Psoas muscle (tissue), 8 donors: ENCODE measurements at regions of chr4 and their contacts with region 1.

Region 1: GRCh38 chr4:52049266-52049665 is 1.8 kb upstream of the SPATA18 start:
- DNase-seq: no peak
- ATAC-seq: no peak
- H3K4me3 ChIP-seq: no peak overlapping the region
- H3K27ac ChIP-seq: no peak overlapping the region
- H3K4me1 ChIP-seq: peaks cover 4% of the 10 kb centered on the region
- H3K27me3 ChIP-seq: peaks cover 0 to 5% (median 0%) of the 10 kb centered on the region in 3 donors
- CTCF ChIP-seq: no peak

Region 2: DNA sequence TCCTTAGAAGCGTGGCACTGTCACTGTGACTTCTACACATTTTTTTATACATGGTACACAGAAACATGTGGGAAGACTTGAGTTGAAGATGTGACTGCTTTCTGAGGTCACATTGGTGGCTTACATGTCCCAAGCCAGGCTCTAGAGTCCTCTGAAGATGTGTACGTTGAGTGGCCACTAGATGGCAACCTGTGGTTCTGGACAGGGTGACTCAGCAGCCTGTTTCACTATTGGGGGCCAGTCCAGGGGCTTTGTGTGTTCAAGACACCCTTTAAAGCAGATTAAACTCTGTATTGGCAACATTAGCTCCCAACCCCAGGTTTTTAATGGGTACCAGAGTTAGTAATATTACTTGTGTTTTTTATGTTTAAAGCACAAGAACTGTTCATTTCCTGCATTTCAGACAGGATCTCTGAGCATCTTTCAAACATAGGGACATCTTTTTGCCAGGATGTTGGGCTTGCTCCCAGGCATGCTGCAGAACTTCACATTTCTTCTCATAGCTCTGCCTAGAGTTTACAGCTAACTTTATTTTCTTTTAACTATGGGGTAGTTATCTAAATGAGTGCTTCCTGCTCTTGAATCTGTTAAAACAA is 153.4 kb before region 1 on chr4:
- intact Hi-C with region 1: no loop called
- DNase-seq: peak; percentile 38 to 61
- ATAC-seq: peak; percentile 90 to 97 (median 96)
- H3K4me3 ChIP-seq: no peak overlapping the region
- H3K27ac ChIP-seq: peak overlapping the region; percentile 57
- H3K4me1 ChIP-seq: peaks cover 12% of the 10 kb centered on the region
- H3K27me3 ChIP-seq: no peaks in the 10 kb centered on the region
- CTCF ChIP-seq: peak; percentile 78

Region 3: GRCh38 chr4:51995647-51996220 is 53.5 kb before region 1 on chr4:
- intact Hi-C with region 1: no loop called
- DNase-seq: no peak
- ATAC-seq: no peak
- H3K4me3 ChIP-seq: no peak overlapping the region
- H3K27ac ChIP-seq: no peak overlapping the region
- H3K4me1 ChIP-seq: no peaks in the 10 kb centered on the region
- H3K27me3 ChIP-seq: no peaks in the 10 kb centered on the region
- CTCF ChIP-seq: no peak

Region 4: GRCh38 chr4:52837726-52838558 is 788.7 kb after region 1 on chr4:
- intact Hi-C with region 1: loop called in 1 of 2 experiments (anchors 10 kb)
- DNase-seq: no peak
- ATAC-seq: peak in 3 of 4 donors; percentile 46 to 74 (median 60)
- H3K4me3 ChIP-seq: no peak overlapping the region
- H3K27ac ChIP-seq: no peak overlapping the region
- H3K4me1 ChIP-seq: peaks cover 39% of the 10 kb centered on the region
- H3K27me3 ChIP-seq: no peaks in the 10 kb centered on the region
- CTCF ChIP-seq: no peak